CD4-positive, alpha-beta T cell (primary cell): ENCODE measurements at regions of chr6 and their contacts with region 1.

Region 1: GRCh38 chr6:408599-409102 is 17.1 kb downstream of the IRF4 start:
- DNase-seq: peak in 2 of 14 experiments; percentile 37 to 49
- ATAC-seq: no peak
- H3K4me3 ChIP-seq: no peak overlapping the region
- H3K4me3 Mint-ChIP-seq: peak overlapping the region; percentile 49
- H3K27ac ChIP-seq: no peak overlapping the region
- H3K27ac Mint-ChIP-seq: peak overlapping the region; percentile 66
- H3K4me1 ChIP-seq: peaks cover 15% of the 10 kb centered on the region
- H3K4me1 Mint-ChIP-seq: peaks cover 20% of the 10 kb centered on the region
- H3K27me3 ChIP-seq: no peaks in the 10 kb centered on the region
- H3K27me3 Mint-ChIP-seq: no peaks in the 10 kb centered on the region
- CTCF ChIP-seq: no peak

Region 2: DNA sequence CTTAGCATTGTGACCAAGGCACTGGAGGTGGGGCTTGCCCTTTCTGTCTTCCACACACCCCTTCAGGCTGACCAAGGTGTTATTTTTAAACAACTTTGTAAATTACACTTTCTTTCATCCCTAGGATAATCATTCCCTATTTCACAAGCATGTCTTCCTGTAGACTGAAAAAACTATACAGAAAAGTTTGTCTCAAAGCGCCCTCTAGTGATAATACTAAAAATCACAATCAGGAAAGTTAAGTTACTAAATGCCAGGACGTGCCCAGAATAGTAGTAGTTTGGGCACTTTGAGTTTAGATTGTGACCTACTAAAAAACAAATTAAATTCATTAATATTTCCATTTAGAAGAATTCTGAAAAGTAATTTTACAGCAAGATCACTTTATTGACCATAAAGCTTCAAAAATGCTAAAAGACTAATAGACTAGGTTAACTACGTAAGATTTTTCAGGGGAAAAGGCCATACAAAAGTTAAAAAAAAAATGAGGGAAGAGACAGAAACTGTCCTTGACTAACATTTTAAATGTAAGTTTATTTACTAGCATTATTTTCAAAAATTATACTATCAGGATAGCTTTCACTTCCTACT is 239.7 kb before region 1 on chr6:
- CTCF ChIA-PET with region 1: no interaction called
- POLR2A ChIA-PET with region 1: no interaction called
- intact Hi-C with region 1: no loop called
- DNase-seq: peak in 3 of 14 experiments; percentile 41 to 52 (median 49)
- ATAC-seq: no peak
- H3K4me3 ChIP-seq: no peak overlapping the region
- H3K4me3 Mint-ChIP-seq: no peak overlapping the region
- H3K27ac ChIP-seq: no peak overlapping the region
- H3K27ac Mint-ChIP-seq: no peak overlapping the region
- H3K4me1 ChIP-seq: no peaks in the 10 kb centered on the region
- H3K4me1 Mint-ChIP-seq: no peaks in the 10 kb centered on the region
- H3K27me3 ChIP-seq: peaks cover 0 to 6% of the 10 kb centered on the region in 2 experiments
- H3K27me3 Mint-ChIP-seq: peaks cover 3% of the 10 kb centered on the region
- CTCF ChIP-seq: peak; percentile 79

Region 3: DNA sequence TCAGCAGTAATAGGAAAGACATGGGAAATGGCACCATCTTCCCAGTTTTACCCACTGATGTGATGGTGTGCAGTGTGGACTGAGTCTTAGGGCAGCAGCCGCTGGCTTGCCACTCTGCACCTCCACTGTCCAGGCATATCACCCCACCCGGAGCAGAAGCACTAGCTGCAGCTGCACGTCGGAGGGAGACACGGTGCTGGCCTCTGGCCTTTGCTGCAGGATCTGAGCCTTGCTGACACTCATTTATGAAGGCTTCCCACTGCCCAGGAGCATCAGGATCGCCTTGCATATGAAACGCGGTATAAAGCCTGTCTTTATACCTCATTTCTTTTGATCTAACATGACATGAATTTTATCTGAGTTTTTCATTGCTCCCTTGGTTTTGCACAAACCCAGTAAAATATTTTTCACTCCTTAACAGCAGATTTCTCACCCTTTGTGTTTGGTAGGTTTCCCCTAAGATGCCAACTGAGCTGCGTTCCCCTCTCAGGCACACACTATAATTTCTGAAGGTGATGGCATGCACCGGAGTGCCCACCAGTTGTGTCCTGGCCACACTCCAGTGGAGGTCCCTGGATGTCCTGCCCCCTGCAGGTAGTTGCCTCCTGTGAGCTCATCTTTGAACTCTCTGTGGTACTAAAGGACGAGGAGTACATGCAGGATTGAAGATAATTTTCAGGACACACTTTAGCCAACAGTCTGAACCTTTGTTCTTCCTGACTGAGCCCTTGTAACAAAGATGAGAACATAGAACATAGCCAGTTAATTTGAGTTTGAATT is 293.2 kb after region 1 on chr6:
- CTCF ChIA-PET with region 1: no interaction called
- POLR2A ChIA-PET with region 1: no interaction called
- intact Hi-C with region 1: loop called in 1 of 2 experiments (anchors 10 kb)
- DNase-seq: no peak
- ATAC-seq: no peak
- H3K4me3 ChIP-seq: no peak overlapping the region
- H3K4me3 Mint-ChIP-seq: no peak overlapping the region
- H3K27ac ChIP-seq: no peak overlapping the region
- H3K27ac Mint-ChIP-seq: no peak overlapping the region
- H3K4me1 ChIP-seq: no peaks in the 10 kb centered on the region
- H3K4me1 Mint-ChIP-seq: no peaks in the 10 kb centered on the region
- H3K27me3 ChIP-seq: no peaks in the 10 kb centered on the region
- H3K27me3 Mint-ChIP-seq: peaks cover 3% of the 10 kb centered on the region
- CTCF ChIP-seq: no peak